ENCODE measurements at regions of chr11 and their contacts with region 1.

Region 1: DNA sequence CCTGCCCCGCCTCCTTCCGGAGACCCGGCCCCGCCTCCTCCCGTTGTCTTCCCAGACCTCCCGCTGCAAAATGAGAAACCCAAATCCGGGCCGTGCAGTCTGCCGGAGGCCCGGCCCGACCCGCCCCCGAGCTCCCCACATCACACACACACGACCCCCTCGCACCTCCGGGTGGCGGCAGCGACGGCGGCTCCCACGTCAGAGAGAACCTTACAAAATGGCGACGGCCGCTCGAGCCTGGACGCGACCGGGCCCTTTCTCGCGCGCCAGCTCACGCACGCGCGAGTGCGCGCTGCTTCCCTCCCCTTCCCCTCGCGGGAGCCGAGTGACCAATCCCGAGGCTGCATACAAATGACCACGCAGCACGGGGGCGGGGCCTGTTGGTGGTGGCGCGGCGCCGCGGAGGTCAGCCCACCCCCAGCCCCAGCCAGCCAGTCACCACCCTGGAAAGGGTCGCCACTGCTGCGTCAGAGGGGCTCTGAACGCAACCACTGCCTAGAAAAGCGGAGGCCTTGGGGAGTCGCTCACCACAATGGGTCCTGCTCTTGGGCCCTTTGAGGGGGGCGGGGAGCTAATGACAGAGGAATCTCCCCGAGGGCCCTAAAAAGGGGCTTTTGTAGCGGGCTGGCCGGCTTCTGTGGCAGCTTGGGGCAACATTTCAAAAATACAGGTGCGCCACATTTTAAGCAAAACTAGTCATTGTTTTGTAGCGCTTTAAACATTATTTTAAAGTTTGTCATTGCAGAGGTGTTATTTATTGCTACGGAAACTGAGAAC is at the start of gene RBM4B:
- DNase-seq: peak; percentile 97
- H3K4me3 Mint-ChIP-seq: peak within 1 kb of the TSS; percentile 93
- H3K27ac Mint-ChIP-seq: peak within 1 kb of the TSS; percentile 96
- H3K4me1 Mint-ChIP-seq: peaks cover 26% of the 10 kb centered on the region
- H3K27me3 Mint-ChIP-seq: no peaks in the 10 kb centered on the region
- total RNA-seq, gene RBM4B: 10.9 to 11.7 TPM

Region 2: GRCh38 chr11:66328307-66329144 is 349.3 kb before region 1 on chr11:
- CTCF ChIA-PET with region 1: no interaction called
- POLR2A ChIA-PET with region 1: no interaction called
- intact Hi-C with region 1: no loop called
- DNase-seq: peak; percentile 90
- H3K4me3 Mint-ChIP-seq: no peak overlapping the region
- H3K27ac Mint-ChIP-seq: peak overlapping the region; percentile 40
- H3K4me1 Mint-ChIP-seq: peaks cover 27% of the 10 kb centered on the region
- H3K27me3 Mint-ChIP-seq: no peaks in the 10 kb centered on the region

Region 3: DNA sequence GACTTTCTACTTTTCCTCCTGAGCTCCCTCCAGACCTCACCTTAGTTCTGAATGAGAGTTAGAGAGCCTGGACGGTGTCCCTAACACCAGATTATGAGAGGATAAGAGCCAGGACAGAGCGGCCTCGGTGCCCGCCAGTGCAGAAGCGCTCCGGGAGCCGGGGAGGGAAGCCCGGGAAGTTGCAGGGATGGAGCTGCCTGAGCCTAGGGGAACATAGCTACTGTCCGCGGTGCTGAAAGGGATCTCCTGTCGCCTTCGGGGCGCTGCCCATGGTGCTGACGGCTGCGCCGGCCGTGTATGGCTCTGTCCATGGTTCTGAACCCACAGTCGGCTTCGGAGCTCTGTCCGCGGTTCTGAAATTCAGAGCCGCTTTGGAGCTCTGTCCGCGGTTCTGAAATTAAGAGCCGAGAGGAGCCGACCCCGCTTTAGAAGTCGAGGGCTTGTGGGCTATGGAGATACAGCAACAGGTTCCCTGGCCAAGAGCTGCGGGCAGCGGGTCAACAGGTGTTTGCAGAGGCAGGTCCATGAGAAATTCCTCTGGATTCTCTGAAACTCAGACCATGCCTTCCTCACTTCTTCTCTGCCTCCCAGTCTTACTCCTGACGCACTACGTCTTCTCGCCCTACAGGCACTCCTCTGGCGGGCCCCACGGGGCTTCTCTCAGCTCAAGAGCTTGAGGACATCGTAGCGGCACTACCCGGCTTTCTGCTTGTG is 256.1 kb before region 1 on chr11:
- CTCF ChIA-PET with region 1: interaction called, 14 read pairs
- POLR2A ChIA-PET with region 1: no interaction called
- intact Hi-C with region 1: loop called (anchors 5 kb)
- DNase-seq: peak; percentile 92
- H3K4me3 Mint-ChIP-seq: no peak overlapping the region
- H3K27ac Mint-ChIP-seq: no peak overlapping the region
- H3K4me1 Mint-ChIP-seq: peaks cover 27% of the 10 kb centered on the region
- H3K27me3 Mint-ChIP-seq: peaks cover 26% of the 10 kb centered on the region

Region 4: GRCh38 chr11:66480117-66480938 is 197.5 kb before region 1 on chr11 and contains the start of gene DPP3:
- CTCF ChIA-PET with region 1: interaction called, 8 read pairs
- POLR2A ChIA-PET with region 1: interaction called, 5 read pairs
- intact Hi-C with region 1: loop called (anchors 1 kb)
- DNase-seq: peak; percentile 98
- H3K4me3 Mint-ChIP-seq: peak within 1 kb of the TSS; percentile 88
- H3K27ac Mint-ChIP-seq: peak within 1 kb of the TSS; percentile 87
- H3K4me1 Mint-ChIP-seq: peaks cover 25% of the 10 kb centered on the region
- H3K27me3 Mint-ChIP-seq: no peaks in the 10 kb centered on the region
- total RNA-seq, gene DPP3: 76.1 to 89.7 TPM

Region 5: DNA sequence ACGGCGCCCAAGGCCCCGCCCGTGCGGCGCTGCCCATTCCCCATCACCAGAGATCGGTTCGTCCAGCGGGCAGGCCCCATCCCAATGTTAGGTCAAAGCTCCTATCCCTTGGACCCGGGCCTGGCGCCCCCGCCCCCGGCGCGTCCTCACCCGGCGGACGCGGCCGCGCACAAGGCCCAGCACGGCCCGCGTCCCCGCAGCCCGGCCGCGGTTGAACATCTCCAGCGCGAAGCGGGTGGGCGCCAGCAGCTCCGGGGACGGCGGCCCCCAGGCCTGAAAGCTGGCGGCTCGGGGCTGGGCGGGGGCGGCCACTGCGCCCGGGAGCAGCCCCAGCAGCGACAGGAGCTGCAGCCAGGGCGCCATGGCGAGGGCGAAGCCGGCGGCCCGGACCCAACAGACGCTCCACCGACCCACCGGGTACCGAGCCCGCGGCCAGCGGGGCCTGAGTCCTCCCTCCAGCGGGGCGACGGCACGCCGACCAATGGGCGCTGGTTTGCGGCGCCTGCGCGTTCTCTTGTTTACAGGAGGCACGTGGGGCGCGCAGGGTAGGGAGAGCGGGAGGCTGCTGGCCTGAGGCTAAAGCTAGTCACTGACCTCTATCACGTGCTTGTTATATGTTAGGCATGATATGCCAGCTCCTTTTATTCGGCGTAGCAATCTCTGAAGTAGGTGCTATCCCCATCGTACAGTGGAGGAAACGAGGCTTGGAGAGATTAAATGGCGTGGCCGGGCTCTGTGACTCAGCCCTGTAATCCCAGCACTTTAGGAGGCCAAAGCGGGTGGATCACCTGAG is 109.5 kb before region 1 on chr11 and contains the start of gene CTSF:
- CTCF ChIA-PET with region 1: interaction called, 13 read pairs
- POLR2A ChIA-PET with region 1: no interaction called
- intact Hi-C with region 1: no loop called
- DNase-seq: peak; percentile 75
- H3K4me3 Mint-ChIP-seq: peak within 1 kb of the TSS; percentile 64
- H3K27ac Mint-ChIP-seq: no peak within 1 kb of the TSS
- H3K4me1 Mint-ChIP-seq: peaks cover 6% of the 10 kb centered on the region
- H3K27me3 Mint-ChIP-seq: no peaks in the 10 kb centered on the region
- total RNA-seq, gene CTSF: 1.4 to 1.5 TPM

Region 6: DNA sequence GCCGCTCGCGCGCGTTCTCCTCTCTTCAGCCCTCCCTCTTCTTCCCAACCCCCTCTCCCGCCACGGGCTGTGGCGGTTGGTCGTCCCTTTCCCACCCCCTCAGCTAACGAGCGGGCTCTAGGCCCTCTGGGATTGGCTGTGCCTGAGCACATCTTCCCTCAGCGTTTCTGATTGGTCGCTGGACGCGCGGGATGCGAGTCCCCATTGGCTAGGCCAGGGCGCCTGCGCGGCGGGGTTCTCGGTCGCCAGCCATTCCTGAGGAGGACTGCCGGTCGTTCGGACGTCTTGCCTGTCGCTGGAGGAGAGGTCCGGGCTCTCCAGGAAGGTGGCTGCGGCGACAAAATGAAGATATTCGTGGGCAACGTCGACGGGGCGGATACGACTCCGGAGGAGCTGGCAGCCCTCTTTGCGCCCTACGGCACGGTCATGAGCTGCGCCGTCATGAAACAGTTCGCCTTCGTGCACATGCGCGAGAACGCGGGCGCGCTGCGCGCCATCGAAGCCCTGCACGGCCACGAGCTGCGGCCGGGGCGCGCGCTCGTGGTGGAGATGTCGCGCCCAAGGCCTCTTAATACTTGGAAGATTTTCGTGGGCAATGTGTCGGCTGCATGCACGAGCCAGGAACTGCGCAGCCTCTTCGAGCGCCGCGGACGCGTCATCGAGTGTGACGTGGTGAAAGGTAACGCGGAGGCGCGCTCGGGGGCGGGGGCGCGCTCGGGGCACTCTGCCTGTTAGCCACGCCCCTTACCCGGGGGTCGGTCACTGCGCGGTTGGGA is 61.2 kb before region 1 on chr11 and contains the start of gene RBM14:
- CTCF ChIA-PET with region 1: interaction called, 23 read pairs
- POLR2A ChIA-PET with region 1: interaction called, 7 read pairs
- intact Hi-C with region 1: loop called (anchors 1 kb)
- DNase-seq: peak; percentile 99
- H3K4me3 Mint-ChIP-seq: peak within 1 kb of the TSS; percentile 91
- H3K27ac Mint-ChIP-seq: peak within 1 kb of the TSS; percentile 94
- H3K4me1 Mint-ChIP-seq: peaks cover 36% of the 10 kb centered on the region
- H3K27me3 Mint-ChIP-seq: no peaks in the 10 kb centered on the region
- total RNA-seq, gene RBM14: 114 to 121 TPM

Region 7: DNA sequence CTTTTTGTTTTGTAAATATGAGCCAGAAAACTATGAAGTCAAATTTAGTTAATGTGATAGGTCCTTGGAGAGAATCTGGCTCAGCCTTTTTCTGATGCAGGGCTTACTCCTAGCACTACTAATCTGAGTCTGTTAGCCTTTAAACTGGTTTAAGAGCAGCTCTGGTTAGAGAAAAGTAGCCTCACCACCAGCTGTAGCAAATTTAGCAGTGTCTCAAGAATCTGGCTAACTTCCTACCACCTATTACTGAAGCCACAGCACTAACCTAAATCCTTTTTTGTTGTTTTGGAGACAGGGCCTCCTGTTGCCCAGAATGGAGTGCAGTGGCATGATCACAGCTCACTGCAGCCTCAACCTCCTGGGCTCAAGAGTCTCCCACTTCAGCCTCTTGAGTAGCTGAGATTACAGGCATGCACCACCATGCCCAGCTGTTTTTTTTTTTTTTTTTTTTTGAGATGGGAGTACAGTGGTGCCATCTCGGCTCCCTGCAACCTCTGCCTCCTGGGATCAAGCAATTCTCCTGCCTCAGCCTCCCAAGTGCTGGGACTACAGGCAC is 14.0 kb before region 1 on chr11:
- CTCF ChIA-PET with region 1: interaction called, 16 read pairs
- POLR2A ChIA-PET with region 1: interaction called, 6 read pairs
- intact Hi-C with region 1: no loop called
- DNase-seq: no peak
- H3K4me3 Mint-ChIP-seq: no peak overlapping the region
- H3K27ac Mint-ChIP-seq: no peak overlapping the region
- H3K4me1 Mint-ChIP-seq: peaks cover 12% of the 10 kb centered on the region
- H3K27me3 Mint-ChIP-seq: no peaks in the 10 kb centered on the region

Region 8: GRCh38 chr11:68235650-68236049 is 1557.9 kb after region 1 on chr11:
- CTCF ChIA-PET with region 1: no interaction called
- POLR2A ChIA-PET with region 1: no interaction called
- intact Hi-C with region 1: no loop called
- DNase-seq: no peak
- H3K4me3 Mint-ChIP-seq: no peak overlapping the region
- H3K27ac Mint-ChIP-seq: no peak overlapping the region
- H3K4me1 Mint-ChIP-seq: no peaks in the 10 kb centered on the region
- H3K27me3 Mint-ChIP-seq: peaks cover 8% of the 10 kb centered on the region

Measured in activated CD4-positive, alpha-beta memory T cell treated with anti-CD3 and anti-CD28 coated beads for 36 hours (primary cell).